Posterior vena cava (tissue), 2 donors: ENCODE measurements at regions of chr7 and their contacts with region 1.

Region 1: GRCh38 chr7:25259587-25260243 is 31.4 kb upstream of the NPVF start:
- DNase-seq: no peak

Region 2: DNA sequence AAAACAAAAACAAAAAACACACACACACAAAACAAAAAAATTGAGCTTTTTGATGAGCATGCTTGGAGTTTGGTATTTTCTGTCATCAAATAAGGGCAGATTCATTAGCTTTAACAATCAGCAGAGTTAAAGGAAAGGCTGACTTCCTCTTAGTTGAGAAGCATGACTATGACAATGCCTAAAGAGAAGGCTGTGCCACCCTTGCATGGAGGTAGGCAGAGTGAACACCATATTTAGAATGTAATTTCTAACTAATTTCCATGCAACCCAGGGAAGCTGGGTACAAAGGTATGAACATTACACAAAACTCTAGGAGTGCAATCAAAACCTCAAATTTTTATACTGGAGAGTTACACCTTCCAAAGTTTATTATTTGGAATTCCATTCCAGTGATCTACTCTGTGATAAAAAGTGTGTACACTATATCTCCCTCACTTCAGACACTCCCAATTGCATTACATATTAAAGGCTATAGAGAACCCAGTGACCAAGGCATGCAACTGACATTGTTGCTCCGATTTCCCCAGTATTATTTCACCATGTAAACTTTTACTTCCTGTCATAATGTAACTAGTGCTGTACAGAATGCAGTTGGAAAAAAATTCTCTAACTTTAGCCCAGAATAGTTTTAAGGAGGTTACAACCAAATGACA is 125.2 kb before region 1 on chr7:
- intact Hi-C with region 1: no loop called
- DNase-seq: no peak

Region 3: DNA sequence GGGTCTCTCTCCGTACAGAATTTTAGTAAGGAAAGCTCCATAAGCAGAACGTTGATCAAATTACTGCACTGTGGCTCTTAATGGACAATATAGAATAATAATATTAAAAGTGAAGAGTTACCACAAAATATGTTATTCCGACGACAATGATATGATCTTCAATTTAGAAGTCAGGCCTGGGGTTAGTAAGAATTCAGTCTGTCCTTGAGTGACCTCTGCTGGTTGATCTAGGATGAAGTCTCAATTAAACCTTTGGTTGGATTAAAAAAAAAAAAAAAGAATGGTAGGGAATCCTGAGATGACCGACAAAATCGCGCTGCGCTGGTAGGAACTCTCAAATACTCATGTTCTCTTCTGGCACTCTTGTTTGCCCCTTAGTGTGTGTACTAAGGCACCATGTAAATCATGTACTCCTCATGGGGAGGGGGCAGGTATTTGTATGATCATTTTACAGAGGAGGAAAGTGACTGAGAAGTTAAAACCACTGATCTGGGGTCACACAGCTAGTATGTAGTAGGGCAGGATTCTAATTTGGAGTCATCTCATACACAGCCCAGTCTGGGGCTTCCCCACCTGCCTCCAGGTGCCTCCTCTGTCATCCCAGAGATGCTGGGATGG is 129.9 kb after region 1 on chr7:
- intact Hi-C with region 1: loop called (anchors 5 kb)
- DNase-seq: no peak

Region 4: DNA sequence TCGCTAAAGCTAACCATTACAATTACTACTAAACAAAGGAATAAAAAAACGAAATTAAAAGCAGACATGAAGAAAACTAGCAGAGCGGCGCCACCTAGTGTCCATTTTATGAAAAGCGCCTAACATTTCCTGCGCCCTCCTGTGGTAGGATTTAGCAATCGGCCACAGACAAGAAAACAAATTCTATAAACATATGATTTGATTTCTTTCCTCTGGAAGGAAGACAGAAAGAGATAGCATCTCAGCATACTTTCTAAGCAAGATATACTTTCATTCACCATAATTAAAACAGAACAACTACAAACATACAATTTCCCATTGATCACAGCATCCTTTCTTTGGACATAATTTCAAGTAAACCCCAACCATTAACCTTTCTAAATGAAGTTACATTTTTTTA is 306.2 kb after region 1 on chr7:
- intact Hi-C with region 1: loop called in 1 of 2 experiments (anchors 5 kb)
- DNase-seq: no peak

Region 5: GRCh38 chr7:25857376-25857921 is 597.7 kb after region 1 on chr7:
- intact Hi-C with region 1: loop called (anchors 2 to 5 kb)
- DNase-seq: no peak